Thyroid gland (tissue), 4 donors: ENCODE measurements at regions of chr3 and their contacts with region 1.

Region 1: GRCh38 chr3:142723968-142724681 is at the start of gene TRPC1:
- DNase-seq: peak; percentile 71 to 72
- H3K4me3 ChIP-seq: peak within 1 kb of the TSS; percentile 61 to 82 (median 78)
- H3K27ac ChIP-seq: peak within 1 kb of the TSS; percentile 72 to 82 (median 80)
- H3K4me1 ChIP-seq: no peaks in the 10 kb centered on the region
- H3K27me3 ChIP-seq: no peaks in the 10 kb centered on the region
- CTCF ChIP-seq: no peak
- POLR2A ChIP-seq: peak in 1 of 2 donors; percentile 89
- total RNA-seq, gene TRPC1: 18.2 to 22.5 (median 20.4) TPM

Region 2: GRCh38 chr3:142586803-142587406 is 137.2 kb before region 1 on chr3:
- intact Hi-C with region 1: loop called (anchors 10 kb)
- DNase-seq: peak; percentile 31 to 45
- H3K4me3 ChIP-seq: no peak overlapping the region
- H3K27ac ChIP-seq: no peak overlapping the region
- H3K4me1 ChIP-seq: no peaks in the 10 kb centered on the region
- H3K27me3 ChIP-seq: no peaks in the 10 kb centered on the region
- CTCF ChIP-seq: peak; percentile 20 to 74 (median 56)
- POLR2A ChIP-seq: no peak

Region 3: DNA sequence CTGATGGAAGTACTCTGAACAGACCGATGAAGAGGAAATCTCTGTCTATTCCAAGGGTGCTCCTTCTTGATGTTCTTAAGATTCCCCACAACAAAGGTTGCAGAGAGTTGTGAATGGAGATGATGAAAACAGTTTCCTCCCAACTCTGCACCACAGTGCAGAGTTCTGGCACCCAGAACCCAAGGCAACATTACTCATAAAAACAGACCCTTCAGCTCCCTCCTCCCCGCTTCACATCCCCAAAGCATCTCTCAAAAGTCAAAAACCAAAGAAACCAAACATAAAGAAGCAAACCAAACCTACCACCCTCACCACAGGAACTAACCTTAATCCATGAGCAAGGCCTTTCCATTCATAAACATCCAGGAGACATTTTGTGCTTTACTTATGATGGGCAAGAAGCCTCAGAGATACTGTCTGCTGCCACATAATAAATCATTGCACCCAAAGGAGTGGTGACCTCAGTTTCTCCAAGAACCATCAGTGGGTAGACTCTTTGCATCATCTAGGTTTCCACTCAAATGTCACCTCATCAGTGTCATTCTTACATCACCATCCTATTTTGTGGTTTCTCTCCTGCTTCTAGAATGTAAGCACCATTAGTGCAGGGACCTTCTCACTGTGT is 151.6 kb after region 1 on chr3:
- intact Hi-C with region 1: no loop called
- DNase-seq: no peak
- H3K4me3 ChIP-seq: no peak overlapping the region
- H3K27ac ChIP-seq: no peak overlapping the region
- H3K4me1 ChIP-seq: no peaks in the 10 kb centered on the region
- H3K27me3 ChIP-seq: no peaks in the 10 kb centered on the region
- CTCF ChIP-seq: no peak
- POLR2A ChIP-seq: no peak